Activated CD8-positive, alpha-beta T cell treated with anti-CD3 and anti-CD28 coated beads, Interleukin-2, amount 10 ng/mL, durations not matched to agents 7 days and 5 days (primary cell): ENCODE measurements at regions of chr2 and their contacts with region 1.

Region 1: DNA sequence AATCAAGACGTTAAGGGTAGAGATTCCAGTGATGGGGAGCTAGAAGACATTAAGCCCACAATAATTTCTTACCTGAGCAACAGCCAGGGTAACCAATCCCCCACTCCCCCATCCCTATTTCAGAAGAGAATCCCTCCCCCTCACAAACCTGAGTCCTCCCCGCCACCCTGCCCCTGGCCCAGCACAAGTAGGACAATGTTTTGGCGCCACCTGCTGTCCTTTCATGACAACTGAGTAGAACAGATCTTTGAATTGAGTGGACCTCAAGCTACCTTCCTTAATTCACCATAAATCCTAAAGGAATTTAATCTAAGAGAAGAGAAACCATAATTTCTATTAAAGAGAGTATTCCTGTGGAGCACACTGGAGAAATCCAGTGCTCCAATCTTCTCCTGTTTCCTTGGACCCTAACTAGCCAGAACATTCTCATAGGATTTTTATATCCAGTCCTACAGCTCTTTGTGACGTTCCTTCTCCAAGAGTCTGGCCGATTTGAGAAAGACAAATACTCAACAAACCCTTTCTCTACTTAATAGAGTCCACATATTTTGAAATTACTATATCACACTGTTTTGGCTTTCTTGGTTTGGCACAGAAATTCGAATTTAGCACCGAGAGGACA is 41.1 kb downstream of the NHEJ1 start:
- DNase-seq: peak; percentile 74
- ATAC-seq: peak; percentile 57
- H3K4me3 Mint-ChIP-seq: no peak overlapping the region
- H3K27ac Mint-ChIP-seq: no peak overlapping the region
- H3K4me1 Mint-ChIP-seq: peaks cover 6% of the 10 kb centered on the region
- H3K27me3 Mint-ChIP-seq: no peaks in the 10 kb centered on the region

Region 2: GRCh38 chr2:219029829-219030165 is 89.7 kb before region 1 on chr2:
- CTCF ChIA-PET with region 1: interaction called, 18 read pairs
- POLR2A ChIA-PET with region 1: no interaction called
- DNase-seq: peak; percentile 82
- ATAC-seq: peak; percentile 91
- H3K4me3 Mint-ChIP-seq: no peak overlapping the region
- H3K27ac Mint-ChIP-seq: no peak overlapping the region
- H3K4me1 Mint-ChIP-seq: no peaks in the 10 kb centered on the region
- H3K27me3 Mint-ChIP-seq: peaks cover 22% of the 10 kb centered on the region

Region 3: DNA sequence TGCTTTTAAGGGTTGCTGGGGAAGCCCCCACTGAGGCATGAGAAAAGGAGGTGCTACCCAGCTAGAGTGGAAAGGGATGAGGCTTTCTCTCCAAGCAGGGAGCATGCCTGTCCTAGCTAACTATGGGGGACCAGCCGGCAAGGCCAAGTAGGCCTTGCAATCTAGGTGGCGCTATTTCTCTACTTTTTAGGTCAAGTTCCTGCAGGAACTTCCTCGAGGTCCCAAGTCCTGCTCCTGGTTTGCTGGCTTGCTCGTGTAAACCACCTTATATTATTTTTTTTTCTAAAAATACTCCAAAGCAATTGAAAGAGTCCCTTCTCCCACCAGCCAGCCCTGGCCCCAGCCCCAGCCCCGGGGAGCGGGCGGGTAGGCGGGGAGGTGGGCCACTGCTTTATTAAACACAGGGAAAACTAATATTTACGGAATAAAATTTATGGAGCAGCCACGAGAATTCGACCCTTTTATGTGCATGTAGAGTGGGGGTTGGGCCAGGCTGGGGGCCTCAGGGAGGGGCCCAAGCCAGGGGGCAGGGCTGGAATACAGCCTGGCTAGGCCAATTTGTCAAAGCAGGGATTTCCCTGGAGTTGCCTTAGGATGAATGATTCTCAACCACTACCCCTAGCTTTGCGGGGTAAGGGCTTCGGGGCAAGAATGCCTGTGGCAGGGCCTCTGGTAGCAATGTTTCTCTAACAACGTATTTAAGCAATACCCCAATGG is 46.0 kb before region 1 on chr2:
- CTCF ChIA-PET with region 1: interaction called, 76 read pairs
- POLR2A ChIA-PET with region 1: no interaction called
- DNase-seq: peak; percentile 28
- ATAC-seq: peak; percentile 42
- H3K4me3 Mint-ChIP-seq: no peak overlapping the region
- H3K27ac Mint-ChIP-seq: no peak overlapping the region
- H3K4me1 Mint-ChIP-seq: no peaks in the 10 kb centered on the region
- H3K27me3 Mint-ChIP-seq: no peaks in the 10 kb centered on the region

Region 4: DNA sequence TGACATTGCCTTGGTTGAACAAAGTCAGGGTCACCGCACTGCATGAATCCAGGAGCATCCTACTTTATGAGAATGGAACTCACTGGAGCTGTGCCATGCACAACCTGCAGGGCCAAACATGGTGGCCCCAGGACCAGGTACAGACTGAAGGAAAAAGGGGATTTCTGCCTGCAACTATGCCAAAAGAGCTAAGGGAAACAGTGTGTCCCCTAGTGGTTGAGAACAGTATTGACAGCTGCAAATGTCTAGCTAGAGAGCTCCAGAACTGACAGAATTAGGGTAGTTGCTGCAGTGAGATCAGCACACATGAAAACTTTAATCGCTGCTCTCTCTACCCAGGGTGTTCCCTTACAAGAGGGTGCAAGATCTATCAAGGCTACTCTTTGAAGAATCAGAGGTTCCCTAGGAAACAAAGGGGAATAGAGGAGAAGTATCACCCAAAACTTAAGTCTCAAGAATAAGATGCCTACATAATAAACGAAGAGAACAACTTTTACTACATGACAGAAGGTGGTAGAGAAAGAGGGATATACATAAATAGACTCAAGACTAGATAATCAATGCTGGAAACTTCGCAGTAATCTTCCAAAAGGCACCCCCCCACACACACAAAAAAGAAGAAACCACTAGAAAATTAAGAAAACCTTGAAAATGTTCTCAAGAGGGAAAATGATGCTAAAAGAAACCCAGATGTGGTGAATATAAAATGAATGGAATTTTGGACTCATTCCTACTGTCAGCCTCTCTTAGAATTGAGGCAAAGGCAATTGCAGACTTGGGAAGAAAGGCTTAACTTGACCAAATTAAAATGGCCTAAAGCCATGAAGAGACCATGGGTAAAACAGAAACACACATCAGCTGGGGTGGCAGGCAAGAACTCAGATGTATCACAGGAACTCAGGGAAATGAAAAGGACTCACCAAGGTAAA is 15.2 kb before region 1 on chr2:
- CTCF ChIA-PET with region 1: interaction called, 21 read pairs
- POLR2A ChIA-PET with region 1: no interaction called
- DNase-seq: peak; percentile 29
- ATAC-seq: peak; percentile 58
- H3K4me3 Mint-ChIP-seq: no peak overlapping the region
- H3K27ac Mint-ChIP-seq: no peak overlapping the region
- H3K4me1 Mint-ChIP-seq: peaks cover 18% of the 10 kb centered on the region
- H3K27me3 Mint-ChIP-seq: no peaks in the 10 kb centered on the region

Region 5: DNA sequence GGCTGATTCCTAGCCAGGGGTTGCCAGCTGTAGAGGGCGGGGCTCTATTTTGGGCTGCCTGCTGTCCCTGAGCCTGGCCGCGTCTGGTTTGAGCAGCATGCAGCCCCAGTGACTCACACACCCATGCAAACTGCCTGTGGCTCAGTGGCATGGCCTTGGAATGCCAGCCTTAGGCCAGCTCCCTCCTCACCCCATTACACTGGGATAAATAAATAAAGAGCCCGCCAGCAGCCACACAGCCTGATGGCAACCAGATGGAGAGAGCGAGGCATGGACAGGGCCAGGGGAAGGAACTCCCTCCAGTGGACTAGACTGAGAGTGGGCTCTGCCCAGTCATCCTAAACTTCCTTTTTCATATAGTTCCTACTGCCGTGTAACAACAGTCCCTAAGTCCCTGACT is 22.8 kb after region 1 on chr2:
- CTCF ChIA-PET with region 1: interaction called, 11 read pairs
- POLR2A ChIA-PET with region 1: no interaction called
- DNase-seq: no peak
- ATAC-seq: no peak
- H3K4me3 Mint-ChIP-seq: no peak overlapping the region
- H3K27ac Mint-ChIP-seq: no peak overlapping the region
- H3K4me1 Mint-ChIP-seq: no peaks in the 10 kb centered on the region
- H3K27me3 Mint-ChIP-seq: no peaks in the 10 kb centered on the region